OCI-LY7 (cell line): ENCODE measurements at regions of chr20 and their contacts with region 1.

Region 1: DNA sequence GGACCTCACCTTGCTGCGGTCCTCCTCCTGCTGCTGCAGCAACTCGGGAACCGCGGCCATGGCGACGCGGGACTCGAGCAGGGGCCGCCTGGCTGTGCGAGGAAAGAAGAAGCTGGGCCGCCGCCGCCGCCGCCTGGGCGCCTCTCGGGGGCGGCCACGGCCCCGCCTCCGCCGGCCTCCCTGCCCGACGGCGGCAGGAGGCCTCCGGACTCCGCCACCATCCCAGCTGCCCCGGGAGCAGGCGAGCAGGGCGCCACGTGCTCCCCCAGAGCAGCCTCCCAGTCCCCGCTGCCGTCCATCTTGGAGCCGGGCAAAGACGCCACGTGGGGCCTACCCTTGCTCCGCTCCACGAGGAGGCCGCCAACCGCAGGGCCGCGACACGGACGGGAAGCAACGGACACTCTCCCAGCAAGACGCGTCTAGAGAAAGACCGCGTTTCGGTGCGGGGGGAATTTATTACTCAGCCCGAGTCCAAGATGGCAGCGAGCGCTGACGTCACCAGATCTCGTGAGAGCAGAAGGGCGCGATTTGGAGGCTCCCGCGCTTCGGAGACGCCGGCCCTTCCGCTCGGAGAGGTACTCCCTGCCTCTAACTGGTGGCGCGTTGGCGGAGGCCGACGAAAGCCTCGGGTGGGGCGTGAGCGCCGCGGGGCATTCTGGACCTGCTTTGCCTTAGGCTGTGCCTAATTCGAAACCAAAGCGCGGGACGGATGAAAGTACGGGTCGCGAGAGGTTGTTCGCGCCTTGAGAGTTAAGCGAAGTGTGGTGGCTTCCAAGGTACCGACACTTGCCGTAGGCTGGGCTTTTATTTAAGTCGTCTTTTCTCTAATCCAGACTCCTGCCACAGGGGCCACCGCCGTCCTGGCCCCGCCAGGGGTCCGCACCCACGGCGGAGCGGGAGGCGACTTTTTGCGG is at the starts of genes MGME1 and SNX5:
- DNase-seq: peak; percentile 99
- H3K4me3 ChIP-seq: peak within 1 kb of the TSS; percentile 97
- H3K27ac ChIP-seq: peak within 1 kb of the TSS; percentile 95
- H3K4me1 ChIP-seq: peaks cover 25% of the 10 kb centered on the region
- CTCF ChIP-seq: no peak
- total RNA-seq, gene MGME1: 46.6 and 47.8 TPM in 2 replicates
- total RNA-seq, gene SNX5: 183 and 204 TPM in 2 replicates

Region 2: DNA sequence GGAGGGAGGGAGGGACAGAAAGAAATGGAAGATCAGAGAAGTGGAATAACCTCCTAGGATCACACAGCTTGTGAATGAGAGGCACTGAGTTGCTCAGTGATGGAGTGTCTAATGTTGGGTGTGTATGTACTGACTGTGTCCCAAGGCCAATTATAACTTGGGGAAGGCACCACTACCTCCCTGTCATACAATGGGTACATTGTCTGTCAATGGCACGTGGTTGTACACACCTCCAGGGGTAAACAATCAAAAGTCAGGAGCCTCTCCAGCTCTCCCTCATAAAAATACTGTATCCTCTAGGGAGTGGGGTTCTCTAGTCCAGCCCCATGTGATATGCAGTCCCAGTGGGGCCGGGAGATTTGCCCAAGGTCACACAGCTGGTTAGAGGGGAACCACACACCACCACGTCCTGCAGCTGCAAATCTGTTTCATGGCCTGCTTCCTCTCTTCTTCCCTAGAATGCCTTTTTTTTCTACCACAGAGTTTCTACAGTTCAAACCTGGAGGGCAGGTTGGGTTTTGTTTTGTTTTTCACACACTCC is 112.5 kb before region 1 on chr20:
- CTCF ChIA-PET with region 1: no interaction called
- POLR2A ChIA-PET with region 1: no interaction called
- intact Hi-C with region 1: loop called (anchors 5 kb)
- DNase-seq: peak; percentile 93
- H3K4me3 ChIP-seq: no peak overlapping the region
- H3K27ac ChIP-seq: peak overlapping the region; percentile 66
- H3K4me1 ChIP-seq: peaks cover 56% of the 10 kb centered on the region
- CTCF ChIP-seq: no peak

Region 3: DNA sequence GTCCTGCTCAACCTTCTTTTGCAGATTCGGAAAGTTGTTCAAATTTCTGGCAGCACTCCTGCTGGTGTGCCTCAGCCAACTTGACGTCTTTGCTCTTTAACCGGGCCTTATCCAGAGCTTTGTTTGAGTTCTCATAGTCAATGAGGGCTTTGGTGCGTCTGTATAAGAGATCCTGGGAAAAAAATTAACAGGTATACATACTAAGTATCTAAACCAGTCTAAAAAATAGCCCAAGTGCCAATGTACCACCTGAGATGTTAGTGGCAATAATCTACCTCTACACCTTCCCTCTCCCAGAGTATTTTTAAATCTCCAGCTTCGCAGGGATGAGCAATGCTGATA is 21.2 kb before region 1 on chr20:
- CTCF ChIA-PET with region 1: no interaction called
- POLR2A ChIA-PET with region 1: interaction called, 16 read pairs
- intact Hi-C with region 1: no loop called
- DNase-seq: no peak
- H3K4me3 ChIP-seq: no peak overlapping the region
- H3K27ac ChIP-seq: peak overlapping the region; percentile 35
- H3K4me1 ChIP-seq: peaks cover 86% of the 10 kb centered on the region
- CTCF ChIP-seq: no peak

Region 4: DNA sequence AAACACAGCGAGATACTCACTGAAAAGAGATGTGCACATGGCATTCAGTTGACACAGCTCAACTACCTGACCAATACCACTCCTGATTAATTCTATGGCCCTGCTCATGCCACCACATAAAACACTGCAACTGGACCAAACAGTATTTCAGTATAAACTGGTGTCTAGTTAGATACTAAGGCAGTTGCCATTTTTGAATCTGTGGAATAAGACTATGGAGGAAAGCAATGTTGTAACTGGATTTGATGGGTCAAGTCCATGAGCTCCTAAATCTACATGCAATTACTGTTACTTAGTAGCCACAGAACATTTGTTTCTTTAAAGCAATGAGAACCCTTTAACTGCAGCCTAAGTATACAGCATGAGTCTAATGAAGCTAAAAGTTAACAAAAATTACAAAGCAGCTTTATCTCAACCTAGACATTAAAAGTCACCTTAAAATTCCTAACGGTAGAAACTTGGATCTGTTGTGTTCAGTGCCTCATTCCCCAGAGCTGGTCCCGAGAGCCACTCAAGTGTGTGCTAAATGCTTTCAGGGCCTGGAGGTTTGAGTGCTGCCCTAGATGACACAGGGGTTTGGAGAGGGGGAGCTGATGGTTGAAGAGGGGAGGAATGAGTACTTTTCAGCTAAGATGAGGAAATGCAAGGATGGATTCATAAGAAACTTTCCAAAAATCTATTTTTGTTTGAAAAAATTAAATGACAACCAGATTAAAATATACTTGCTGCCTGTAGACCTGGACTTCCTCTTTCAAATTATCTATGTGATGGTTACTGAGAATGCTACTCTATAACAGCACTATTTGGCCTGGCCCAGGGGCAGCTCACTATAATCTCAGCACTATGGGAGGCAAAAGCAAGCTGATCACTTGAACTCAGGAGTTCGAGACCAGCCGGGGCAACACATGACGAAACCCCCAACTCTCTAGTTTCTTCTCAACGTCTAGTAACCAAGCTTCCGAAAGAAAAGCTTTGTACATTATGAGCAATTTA is 15.6 kb before region 1 on chr20:
- CTCF ChIA-PET with region 1: no interaction called
- POLR2A ChIA-PET with region 1: interaction called, 47 read pairs
- intact Hi-C with region 1: loop called (anchors 1 kb)
- DNase-seq: no peak
- H3K4me3 ChIP-seq: no peak overlapping the region
- H3K27ac ChIP-seq: peak overlapping the region; percentile 11
- H3K4me1 ChIP-seq: peaks cover 81% of the 10 kb centered on the region
- CTCF ChIP-seq: no peak

Region 5: GRCh38 chr20:17958373-17959256 is 10.0 kb before region 1 on chr20:
- CTCF ChIA-PET with region 1: no interaction called
- POLR2A ChIA-PET with region 1: interaction called, 47 read pairs
- intact Hi-C with region 1: loop called (anchors 1 kb)
- DNase-seq: no peak
- H3K4me3 ChIP-seq: peak overlapping the region; percentile 97
- H3K27ac ChIP-seq: peak overlapping the region; percentile 55
- H3K4me1 ChIP-seq: peaks cover 100% of the 10 kb centered on the region
- CTCF ChIP-seq: no peak

Region 6: DNA sequence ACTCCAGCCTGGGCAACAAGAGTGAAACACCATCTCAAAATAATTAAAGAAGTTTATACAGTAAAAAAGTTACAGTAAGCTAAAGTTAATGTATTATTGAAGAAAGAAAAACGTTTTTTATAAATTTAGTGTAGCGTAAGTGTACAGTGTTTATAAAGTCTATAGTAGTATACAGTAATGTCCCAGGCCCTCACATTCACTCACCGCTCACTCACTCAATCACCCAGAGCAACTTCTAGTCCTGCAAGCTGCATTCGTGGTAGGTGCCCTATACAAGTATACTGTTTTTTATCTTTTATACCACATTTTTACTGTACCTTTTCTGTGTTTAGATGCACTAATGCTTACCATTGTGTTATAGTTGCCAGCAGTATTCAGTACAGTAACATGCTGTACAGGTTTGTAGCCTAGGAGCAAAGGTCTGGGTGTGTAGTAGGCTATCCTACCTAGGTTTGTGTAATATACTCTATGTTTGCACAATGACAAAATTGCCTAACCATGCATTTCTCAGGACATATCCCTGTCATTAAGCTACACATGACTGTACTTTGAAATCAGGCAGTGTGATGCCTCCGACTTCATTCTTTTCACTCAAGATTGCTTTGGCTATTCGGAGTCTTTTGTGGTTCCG is 16.9 kb after region 1 on chr20:
- CTCF ChIA-PET with region 1: interaction called, 6 read pairs
- POLR2A ChIA-PET with region 1: interaction called, 10 read pairs
- intact Hi-C with region 1: no loop called
- DNase-seq: no peak
- H3K4me3 ChIP-seq: no peak overlapping the region
- H3K27ac ChIP-seq: no peak overlapping the region
- H3K4me1 ChIP-seq: no peaks in the 10 kb centered on the region
- CTCF ChIP-seq: no peak

Region 7: DNA sequence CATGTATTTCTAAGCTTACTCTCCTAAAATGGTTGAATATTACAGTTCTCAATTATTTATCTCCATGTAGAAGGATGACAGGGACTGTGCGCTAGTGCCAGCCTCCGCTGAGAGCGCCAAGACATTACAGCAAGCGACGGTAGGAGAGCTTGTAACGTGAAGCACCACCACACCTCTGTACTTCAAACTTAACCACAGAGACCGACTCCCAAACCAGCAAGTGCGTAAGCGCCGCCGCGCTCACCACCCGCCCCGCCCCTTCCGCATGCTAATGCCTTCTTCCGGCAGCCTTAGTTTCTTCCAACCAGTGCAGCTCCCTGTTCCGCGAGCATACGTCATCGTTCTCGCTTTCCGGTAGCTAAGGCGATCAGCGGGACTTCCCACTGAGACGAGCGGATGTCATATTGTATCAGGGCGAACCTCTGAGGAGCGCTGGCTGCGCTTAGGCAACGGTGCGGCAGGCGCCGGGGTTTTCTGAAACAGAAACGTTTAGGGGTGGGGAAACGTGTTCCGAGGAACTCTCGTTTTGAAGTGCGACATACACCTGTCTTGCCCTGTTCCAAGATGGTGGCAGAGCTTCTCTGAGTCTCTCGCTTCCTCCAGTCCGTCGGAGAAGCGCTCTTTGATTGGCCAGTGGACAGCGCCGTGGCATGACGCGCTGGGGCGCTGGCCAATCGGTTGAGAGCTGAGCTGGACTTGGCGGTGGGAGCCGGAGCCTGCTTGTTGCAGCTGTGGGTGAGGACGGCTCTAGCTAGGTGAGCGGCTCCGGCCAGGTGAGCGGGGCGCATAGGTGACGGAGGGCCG is 538.8 kb after region 1 on chr20 and contains the start of gene SEC23B:
- CTCF ChIA-PET with region 1: no interaction called
- POLR2A ChIA-PET with region 1: no interaction called
- intact Hi-C with region 1: loop called (anchors 10 kb)
- DNase-seq: peak; percentile 97
- H3K4me3 ChIP-seq: peak within 1 kb of the TSS; percentile 91
- H3K27ac ChIP-seq: peak within 1 kb of the TSS; percentile 90
- H3K4me1 ChIP-seq: peaks cover 15% of the 10 kb centered on the region
- CTCF ChIP-seq: no peak
- total RNA-seq, gene SEC23B: 40.3 and 42.6 TPM in 2 replicates